AG04449 (cell line): ENCODE measurements at regions of chr16 and their contacts with region 1.

Region 1: GRCh38 chr16:67268136-67268579 is 11.2 kb upstream of the PLEKHG4 start:
- DNase-seq: no peak
- H3K4me3 ChIP-seq: no peak overlapping the region
- CTCF ChIP-seq: no peak

Region 2: GRCh38 chr16:66516808-66517585 is 751.2 kb before region 1 on chr16:
- CTCF ChIA-PET with region 1: no interaction called
- POLR2A ChIA-PET with region 1: no interaction called
- DNase-seq: peak; percentile 85
- H3K4me3 ChIP-seq: no peak overlapping the region
- CTCF ChIP-seq: no peak

Region 3: DNA sequence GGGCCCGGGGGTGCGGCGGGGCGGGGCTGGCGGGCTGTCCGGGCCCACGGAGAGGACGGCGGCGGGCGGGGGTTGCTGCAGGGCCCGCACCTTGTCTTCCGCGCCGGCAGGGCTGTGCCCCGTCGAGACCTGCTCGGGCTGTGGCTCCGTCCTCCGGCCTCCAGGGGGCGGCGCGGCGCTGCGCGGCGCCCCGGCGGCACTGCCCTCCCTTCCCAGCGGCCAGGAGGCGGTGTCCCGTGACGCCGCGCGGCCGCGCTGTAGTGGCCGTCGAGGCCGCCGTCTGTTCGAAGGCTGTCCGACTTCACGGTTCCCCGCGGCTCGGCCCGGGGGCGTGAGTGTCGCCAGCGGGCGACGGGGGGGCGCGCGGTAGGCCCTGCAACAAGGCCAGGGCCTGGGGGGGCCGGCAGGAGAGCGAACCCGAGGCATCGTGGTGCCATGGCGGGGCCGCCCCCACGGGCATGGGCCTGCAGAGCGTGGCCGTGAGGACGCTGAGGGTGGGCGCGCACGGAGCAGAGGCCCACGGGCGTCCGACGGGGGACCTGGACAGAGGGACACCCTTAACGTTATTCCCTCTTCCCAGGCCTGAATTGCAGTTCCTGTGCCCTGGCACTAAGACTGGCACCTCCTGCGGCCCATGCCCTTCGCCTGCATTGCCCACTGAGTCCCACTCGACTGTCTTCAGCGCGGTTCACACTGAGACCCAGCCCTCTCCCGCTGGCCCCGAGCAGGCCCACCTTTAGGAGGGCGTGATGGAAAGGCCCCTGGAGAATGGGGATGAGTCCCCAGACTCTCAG is 11.3 kb after region 1 on chr16 and contains the start of gene PLEKHG4:
- CTCF ChIA-PET with region 1: interaction called, 46 read pairs
- POLR2A ChIA-PET with region 1: interaction called, 13 read pairs
- DNase-seq: no peak
- H3K4me3 ChIP-seq: peak within 1 kb of the TSS; percentile 71
- CTCF ChIP-seq: peak; percentile 61

Region 4: GRCh38 chr16:67284699-67285646 is 16.8 kb after region 1 on chr16:
- CTCF ChIA-PET with region 1: interaction called, 46 read pairs
- POLR2A ChIA-PET with region 1: no interaction called
- DNase-seq: no peak
- H3K4me3 ChIP-seq: no peak overlapping the region
- CTCF ChIP-seq: peak; percentile 60